Left cardiac atrium (tissue), 4 donors: ENCODE measurements at regions of chr2 and their contacts with region 1.

Region 1: GRCh38 chr2:222797261-222797660 is 63.6 kb upstream of the ACSL3 start:
- DNase-seq: no peak
- ATAC-seq: peak in 1 of 2 donors; percentile 24

Region 2: DNA sequence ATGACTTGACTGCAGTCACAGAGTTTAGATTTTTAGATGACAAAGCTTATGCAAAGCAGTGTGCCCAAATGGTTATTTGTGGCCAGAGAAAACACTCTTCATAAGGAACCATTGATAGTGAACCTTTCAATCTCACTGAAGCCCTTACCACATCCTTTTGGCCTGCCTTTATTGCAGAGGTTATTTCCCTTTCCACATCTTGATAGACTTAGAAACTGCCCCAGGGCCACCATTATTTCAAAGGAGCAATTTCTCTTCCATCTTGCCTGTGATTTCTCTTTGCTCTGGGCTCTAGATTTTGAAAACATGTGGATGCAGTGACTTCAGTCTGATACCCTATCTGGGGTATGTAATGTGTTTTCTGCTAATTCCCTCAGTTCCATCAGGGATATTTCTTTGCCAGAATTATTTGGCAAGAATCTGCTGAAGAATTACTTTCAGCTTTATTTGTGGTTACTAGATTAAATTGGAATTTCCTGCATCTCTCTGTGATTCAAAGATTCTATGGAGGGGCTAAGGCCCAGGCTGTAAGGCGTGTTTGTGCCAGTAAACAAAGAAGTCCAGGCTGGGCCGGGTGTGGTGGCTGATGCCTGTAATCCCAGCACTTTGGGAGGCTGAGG is 74.8 kb before region 1 on chr2:
- intact Hi-C with region 1: loop called in 1 of 2 experiments (anchors 10 kb)
- DNase-seq: no peak
- ATAC-seq: peak; percentile 34 to 86

Region 3: GRCh38 chr2:222892321-222892720 is 95.1 kb after region 1 on chr2:
- intact Hi-C with region 1: no loop called
- DNase-seq: no peak
- ATAC-seq: peak; percentile 73 to 90